ENCODE measurements at regions of chr6 and their contacts with region 1.

Region 1: GRCh38 chr6:106347341-106347740 is 13.2 kb upstream of the CRYBG1 start:
- DNase-seq: no peak
- H3K4me3 ChIP-seq: no peak overlapping the region
- H3K27ac ChIP-seq: no peak overlapping the region
- H3K4me1 ChIP-seq: no peaks in the 10 kb centered on the region
- CTCF ChIP-seq: no peak

Region 2: DNA sequence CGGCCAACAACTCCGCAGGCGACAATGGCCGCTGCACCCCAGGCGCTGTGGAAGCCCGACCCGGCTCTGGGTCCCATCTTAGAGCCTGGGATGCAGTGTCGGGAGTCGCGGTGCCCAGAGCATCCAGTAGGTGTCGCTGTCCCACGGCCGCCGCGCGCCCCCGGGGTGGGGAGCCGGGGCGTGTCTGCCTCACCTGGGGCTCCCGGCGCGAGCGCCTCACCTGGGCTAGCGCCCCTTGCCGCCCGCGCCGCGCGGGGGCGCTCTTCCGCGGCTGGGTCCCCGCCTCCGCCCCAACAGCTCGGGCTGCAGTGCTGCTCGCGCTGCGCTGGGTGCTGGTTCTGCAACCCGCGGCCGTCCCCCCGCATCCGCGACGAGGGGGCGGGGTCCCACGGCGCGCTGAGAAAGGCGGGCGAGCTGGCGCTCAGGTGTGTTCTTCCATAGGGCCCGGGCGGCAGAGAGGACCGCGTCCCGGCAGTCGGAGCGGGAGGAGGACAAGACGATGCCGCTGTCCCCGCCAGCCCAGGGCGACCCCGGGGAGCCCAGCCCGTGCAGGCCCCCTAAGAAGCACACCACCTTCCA is 13.2 kb after region 1 on chr6 and contains the start of gene CRYBG1:
- CTCF ChIA-PET with region 1: no interaction called
- POLR2A ChIA-PET with region 1: interaction called, 4 read pairs
- intact Hi-C with region 1: loop called (anchors 1 kb)
- DNase-seq: peak; percentile 23
- H3K4me3 ChIP-seq: no peak within 1 kb of the TSS
- H3K27ac ChIP-seq: no peak within 1 kb of the TSS
- H3K4me1 ChIP-seq: no peaks in the 10 kb centered on the region
- CTCF ChIP-seq: peak; percentile 83
- total RNA-seq, gene CRYBG1: 41.7 and 44.7 TPM in 2 replicates

Region 3: GRCh38 chr6:106397431-106397830 is 50.1 kb after region 1 on chr6:
- CTCF ChIA-PET with region 1: no interaction called
- POLR2A ChIA-PET with region 1: no interaction called
- intact Hi-C with region 1: loop called (anchors 5 kb)
- DNase-seq: no peak
- H3K4me3 ChIP-seq: no peak overlapping the region
- H3K27ac ChIP-seq: no peak overlapping the region
- H3K4me1 ChIP-seq: no peaks in the 10 kb centered on the region
- CTCF ChIP-seq: no peak

Region 4: DNA sequence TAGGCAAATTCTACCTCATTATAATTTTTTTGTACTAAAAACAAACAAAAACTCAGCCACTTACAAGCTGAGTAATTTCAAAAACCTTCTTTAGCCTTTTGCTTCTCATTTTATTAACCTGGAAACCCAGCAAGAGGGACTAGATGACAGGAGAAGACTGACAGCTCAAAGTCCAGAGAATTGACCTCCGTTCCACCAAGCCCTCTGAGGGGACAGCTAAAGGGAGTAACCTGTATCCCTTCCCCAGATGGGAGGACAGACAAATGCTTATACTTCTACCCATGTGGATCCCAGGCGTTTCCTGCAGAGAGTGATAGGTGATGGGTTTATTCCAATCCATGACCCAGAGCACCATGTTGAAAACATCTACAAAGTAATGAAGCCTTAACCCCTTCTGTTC is 662.2 kb after region 1 on chr6:
- CTCF ChIA-PET with region 1: no interaction called
- POLR2A ChIA-PET with region 1: no interaction called
- intact Hi-C with region 1: no loop called
- DNase-seq: no peak
- H3K4me3 ChIP-seq: no peak overlapping the region
- H3K27ac ChIP-seq: no peak overlapping the region
- H3K4me1 ChIP-seq: no peaks in the 10 kb centered on the region
- CTCF ChIP-seq: no peak